ENCODE measurements at regions of chr5 and their contacts with region 1.

Region 1: GRCh38 chr5:35869685-35870277 is 13.1 kb downstream of the IL7R start:
- DNase-seq: no peak
- ATAC-seq: no peak
- H3K4me3 ChIP-seq: peak overlapping the region in 1 of 2 donors; percentile 2
- H3K4me3 Mint-ChIP-seq: peak overlapping the region in 2 of 3 donors; percentile 21 to 57
- H3K27ac ChIP-seq: peak overlapping the region; percentile 22
- H3K27ac Mint-ChIP-seq: peak overlapping the region; percentile 84
- H3K4me1 ChIP-seq: peaks cover 32 to 33% of the 10 kb centered on the region in 2 experiments
- H3K4me1 Mint-ChIP-seq: peaks cover 88 to 91% (median 88%) of the 10 kb centered on the region in 3 donors
- H3K27me3 ChIP-seq: no peaks in the 10 kb centered on the region
- H3K27me3 Mint-ChIP-seq: no peaks in the 10 kb centered on the region

Region 2: DNA sequence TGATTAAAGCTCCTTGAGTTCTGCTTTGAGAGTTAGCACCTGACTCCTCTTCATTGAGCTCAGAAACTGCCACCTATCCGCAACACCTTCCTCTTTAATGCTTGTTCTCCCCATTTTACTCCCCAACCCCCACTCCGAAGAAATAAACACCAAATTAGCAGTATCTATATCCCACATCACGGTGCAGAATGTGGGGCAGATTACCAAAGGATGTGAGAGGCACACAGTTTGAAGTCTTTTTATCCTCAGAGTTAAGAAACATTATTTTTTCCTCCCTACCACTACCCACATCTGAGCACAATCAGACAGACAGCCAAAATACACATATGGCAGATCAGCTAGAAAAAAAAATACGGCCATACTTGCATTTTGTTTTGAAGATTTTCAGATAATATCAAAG is 39.2 kb before region 1 on chr5:
- CTCF ChIA-PET with region 1: no interaction called
- POLR2A ChIA-PET with region 1: interaction called in 1 of 2 experiments, 12 read pairs
- DNase-seq: peak in 31 of 35 experiments; percentile 24 to 80 (median 53)
- ATAC-seq: peak; percentile 87 to 95 (median 90)
- H3K4me3 ChIP-seq: no peak overlapping the region
- H3K4me3 Mint-ChIP-seq: peak overlapping the region; percentile 32 to 57 (median 40)
- H3K27ac ChIP-seq: peak overlapping the region; percentile 66
- H3K27ac Mint-ChIP-seq: peak overlapping the region; percentile 91 to 99
- H3K4me1 ChIP-seq: peaks cover 42 to 69% of the 10 kb centered on the region in 2 experiments
- H3K4me1 Mint-ChIP-seq: peaks cover 92 to 94% (median 92%) of the 10 kb centered on the region in 3 donors
- H3K27me3 ChIP-seq: no peaks in the 10 kb centered on the region
- H3K27me3 Mint-ChIP-seq: no peaks in the 10 kb centered on the region

Region 3: DNA sequence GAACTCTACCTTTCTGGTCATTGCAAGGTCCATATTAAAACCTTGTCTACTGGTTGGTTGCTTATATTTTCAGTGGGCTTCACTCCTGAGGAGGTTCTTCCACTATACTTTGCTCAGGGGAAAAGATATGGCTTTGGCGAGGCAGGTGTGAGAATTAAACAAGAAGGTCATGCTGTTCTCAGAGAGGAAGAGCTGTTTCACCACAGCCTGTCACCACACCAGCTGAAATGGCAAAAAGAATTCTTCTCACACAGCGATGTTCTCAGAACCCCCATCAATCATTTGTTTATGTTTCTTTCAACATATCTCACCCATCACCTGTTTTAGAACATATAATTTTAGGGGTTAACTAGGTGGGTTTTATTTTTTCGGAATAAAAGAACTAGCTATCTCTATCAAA is 30.0 kb after region 1 on chr5:
- CTCF ChIA-PET with region 1: no interaction called
- POLR2A ChIA-PET with region 1: no interaction called
- DNase-seq: peak in 1 of 35 experiments; percentile 21
- ATAC-seq: peak in 2 of 4 experiments; percentile 30 to 55
- H3K4me3 ChIP-seq: no peak overlapping the region
- H3K4me3 Mint-ChIP-seq: peak overlapping the region in 1 of 3 donors; percentile 49
- H3K27ac ChIP-seq: peak overlapping the region; percentile 3
- H3K27ac Mint-ChIP-seq: peak overlapping the region; percentile 79 to 81
- H3K4me1 ChIP-seq: peaks cover 11 to 17% of the 10 kb centered on the region in 2 experiments
- H3K4me1 Mint-ChIP-seq: peaks cover 52 to 59% (median 55%) of the 10 kb centered on the region in 3 donors
- H3K27me3 ChIP-seq: no peaks in the 10 kb centered on the region
- H3K27me3 Mint-ChIP-seq: no peaks in the 10 kb centered on the region